Naive thymus-derived CD4-positive, alpha-beta T cell (primary cell): ENCODE measurements at regions of chr12 and their contacts with region 1.

Region 1: GRCh38 chr12:122421821-122422729 is at the start of gene CLIP1:
- DNase-seq: peak; percentile 40 to 73 (median 57)
- ATAC-seq: peak; percentile 84
- H3K4me3 ChIP-seq: peak within 1 kb of the TSS; percentile 71
- H3K4me3 Mint-ChIP-seq: peak within 1 kb of the TSS; percentile 91 to 97 (median 92)
- H3K27ac ChIP-seq: peak within 1 kb of the TSS; percentile 90
- H3K27ac Mint-ChIP-seq: peak within 1 kb of the TSS; percentile 83 to 93 (median 91)
- H3K4me1 ChIP-seq: peaks cover 17 to 20% of the 10 kb centered on the region in 2 donors
- H3K4me1 Mint-ChIP-seq: peaks cover 23 to 39% (median 35%) of the 10 kb centered on the region in 7 donors
- H3K27me3 ChIP-seq: no peaks in the 10 kb centered on the region
- H3K27me3 Mint-ChIP-seq: no peaks in the 10 kb centered on the region
- total RNA-seq, gene CLIP1: 54.7 to 89.3 (median 65.1) TPM

Region 2: GRCh38 chr12:122399592-122400373 is 22.3 kb before region 1 on chr12:
- CTCF ChIA-PET with region 1: interaction called, 16 read pairs
- POLR2A ChIA-PET with region 1: interaction called, 4 read pairs
- intact Hi-C with region 1: loop called (anchors 1 kb)
- DNase-seq: peak in 8 of 9 donors; percentile 27 to 76 (median 65)
- ATAC-seq: peak; percentile 77
- H3K4me3 ChIP-seq: no peak overlapping the region
- H3K4me3 Mint-ChIP-seq: peak overlapping the region; percentile 40 to 80 (median 69)
- H3K27ac ChIP-seq: peak overlapping the region; percentile 56
- H3K27ac Mint-ChIP-seq: peak overlapping the region; percentile 83 to 96 (median 89)
- H3K4me1 ChIP-seq: peaks cover 0 to 6% of the 10 kb centered on the region in 2 donors
- H3K4me1 Mint-ChIP-seq: peaks cover 24 to 50% (median 39%) of the 10 kb centered on the region in 7 donors
- H3K27me3 ChIP-seq: no peaks in the 10 kb centered on the region
- H3K27me3 Mint-ChIP-seq: no peaks in the 10 kb centered on the region

Region 3: GRCh38 chr12:122452701-122453285 is 30.7 kb after region 1 on chr12:
- CTCF ChIA-PET with region 1: interaction called, 3 read pairs
- POLR2A ChIA-PET with region 1: interaction called, 7 read pairs
- intact Hi-C with region 1: loop called (anchors 1 to 2 kb)
- DNase-seq: no peak
- ATAC-seq: no peak
- H3K4me3 ChIP-seq: peak overlapping the region; percentile 36
- H3K4me3 Mint-ChIP-seq: peak overlapping the region; percentile 64 to 87 (median 81)
- H3K27ac ChIP-seq: peak overlapping the region; percentile 63
- H3K27ac Mint-ChIP-seq: peak overlapping the region; percentile 91 to 99 (median 98)
- H3K4me1 ChIP-seq: peaks cover 22 to 24% of the 10 kb centered on the region in 2 donors
- H3K4me1 Mint-ChIP-seq: peaks cover 22 to 41% (median 33%) of the 10 kb centered on the region in 7 donors
- H3K27me3 ChIP-seq: no peaks in the 10 kb centered on the region
- H3K27me3 Mint-ChIP-seq: no peaks in the 10 kb centered on the region

Region 4: GRCh38 chr12:122726080-122726558 is 304.0 kb after region 1 on chr12:
- CTCF ChIA-PET with region 1: no interaction called
- POLR2A ChIA-PET with region 1: no interaction called
- intact Hi-C with region 1: no loop called
- DNase-seq: peak in 1 of 9 donors; percentile 47
- ATAC-seq: peak; percentile 69
- H3K4me3 ChIP-seq: no peak overlapping the region
- H3K4me3 Mint-ChIP-seq: peak overlapping the region in 1 of 10 donors; percentile 57
- H3K27ac ChIP-seq: no peak overlapping the region
- H3K27ac Mint-ChIP-seq: peak overlapping the region in 4 of 9 donors; percentile 17 to 62 (median 38)
- H3K4me1 ChIP-seq: peaks cover 0 to 14% of the 10 kb centered on the region in 2 donors
- H3K4me1 Mint-ChIP-seq: peaks cover 0 to 70% (median 27%) of the 10 kb centered on the region in 7 donors
- H3K27me3 ChIP-seq: no peaks in the 10 kb centered on the region
- H3K27me3 Mint-ChIP-seq: no peaks in the 10 kb centered on the region